ENCODE measurements at regions of chr7 and their contacts with region 1.

Region 1: GRCh38 chr7:49497471-49497870 is 276.0 kb upstream of the VWC2 start:
- DNase-seq: no peak
- ATAC-seq: no peak
- H3K4me3 ChIP-seq: no peak overlapping the region
- H3K27ac ChIP-seq: no peak overlapping the region
- H3K4me1 ChIP-seq: no peaks in the 10 kb centered on the region
- H3K27me3 ChIP-seq: no peaks in the 10 kb centered on the region
- CTCF ChIP-seq: no peak
- POLR2A ChIP-seq: no peak

Region 2: DNA sequence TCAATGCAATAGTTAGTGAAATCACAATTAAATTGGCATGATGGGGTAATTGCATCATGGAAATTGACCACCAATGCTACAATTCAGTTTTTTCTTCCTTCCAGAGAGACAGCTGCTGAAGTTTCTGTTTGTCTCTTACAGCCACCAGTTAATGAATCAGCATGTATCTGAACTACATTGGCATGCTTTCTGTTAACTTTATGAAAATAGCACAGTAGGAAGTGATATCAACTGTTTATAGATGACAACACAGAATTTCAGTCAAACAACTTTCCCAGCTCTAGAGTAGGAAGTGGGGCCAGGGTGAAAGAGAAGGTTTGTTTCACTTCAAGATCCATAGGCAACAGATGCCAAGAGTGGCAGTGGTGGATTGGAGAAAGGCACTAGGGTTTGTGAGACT is 63.7 kb before region 1 on chr7:
- intact Hi-C with region 1: loop called in 1 of 10 experiments (anchors 10 kb)
- DNase-seq: no peak
- ATAC-seq: no peak
- H3K4me3 ChIP-seq: no peak overlapping the region
- H3K27ac ChIP-seq: no peak overlapping the region
- H3K4me1 ChIP-seq: no peaks in the 10 kb centered on the region
- H3K27me3 ChIP-seq: no peaks in the 10 kb centered on the region
- CTCF ChIP-seq: no peak
- POLR2A ChIP-seq: no peak

Region 3: GRCh38 chr7:49513911-49514310 is 16.4 kb after region 1 on chr7:
- intact Hi-C with region 1: loop called in 1 of 10 experiments (anchors 2 kb)
- DNase-seq: no peak
- ATAC-seq: peak in 2 of 4 donors; percentile 18 to 26
- H3K4me3 ChIP-seq: no peak overlapping the region
- H3K27ac ChIP-seq: no peak overlapping the region
- H3K4me1 ChIP-seq: peaks cover 0 to 3% (median 0%) of the 10 kb centered on the region in 12 donors
- H3K27me3 ChIP-seq: no peaks in the 10 kb centered on the region
- CTCF ChIP-seq: no peak
- POLR2A ChIP-seq: no peak

Measured in heart left ventricle (tissue), 16 donors.